Pancreas (tissue), 10 donors: ENCODE measurements at regions of chr22 and their contacts with region 1.

Region 1: GRCh38 chr22:46245511-46245910 is 4.6 kb downstream of the CDPF1 start:
- DNase-seq: no peak
- ATAC-seq: no peak
- H3K4me3 ChIP-seq: no peak overlapping the region
- H3K27ac ChIP-seq: no peak overlapping the region
- H3K4me1 ChIP-seq: peaks cover 0 to 13% (median 0%) of the 10 kb centered on the region in 3 donors
- H3K27me3 ChIP-seq: no peaks in the 10 kb centered on the region
- CTCF ChIP-seq: no peak

Region 2: GRCh38 chr22:46122511-46122971 is 123.0 kb before region 1 on chr22:
- intact Hi-C with region 1: no loop called
- DNase-seq: peak in 5 of 6 donors; percentile 54 to 93 (median 83)
- ATAC-seq: peak; percentile 47 to 80 (median 74)
- H3K4me3 ChIP-seq: no peak overlapping the region
- H3K27ac ChIP-seq: no peak overlapping the region
- H3K4me1 ChIP-seq: no peaks in the 10 kb centered on the region
- H3K27me3 ChIP-seq: no peaks in the 10 kb centered on the region
- CTCF ChIP-seq: peak; percentile 86 to 95 (median 90)

Region 3: DNA sequence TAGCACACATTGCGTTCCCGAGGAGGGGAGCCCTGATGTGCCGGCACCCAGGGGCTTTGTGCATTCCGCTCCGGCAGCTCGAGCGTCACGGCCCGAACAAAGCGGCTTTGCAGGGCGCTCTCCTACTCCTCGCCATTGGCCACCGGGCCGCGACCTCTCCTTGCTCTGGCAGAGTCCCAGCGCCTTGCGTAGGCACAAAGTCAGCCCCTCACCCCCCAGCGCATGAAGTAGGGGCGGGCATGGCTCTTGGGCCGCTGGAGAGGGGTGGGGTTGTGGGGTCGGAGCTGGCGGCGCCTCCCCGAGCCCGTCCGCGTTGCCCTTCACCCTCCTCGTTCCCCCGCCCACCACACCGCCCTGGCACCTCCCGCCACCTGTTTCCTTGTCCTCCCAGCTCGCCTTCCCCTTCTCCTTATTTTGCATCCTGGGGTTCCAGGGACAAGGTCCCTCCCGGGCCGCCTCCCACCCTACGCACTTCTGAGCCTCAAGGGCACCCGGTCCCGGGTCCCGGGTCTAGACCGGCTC is 95.9 kb before region 1 on chr22:
- intact Hi-C with region 1: loop called in 1 of 3 experiments (anchors 10 kb)
- DNase-seq: peak; percentile 73 to 91 (median 80)
- ATAC-seq: peak; percentile 53 to 66 (median 60)
- H3K4me3 ChIP-seq: peak overlapping the region; percentile 52 to 91 (median 81)
- H3K27ac ChIP-seq: peak overlapping the region; percentile 71 to 97 (median 92)
- H3K4me1 ChIP-seq: peaks cover 0 to 5% (median 3%) of the 10 kb centered on the region in 3 donors
- H3K27me3 ChIP-seq: no peaks in the 10 kb centered on the region
- CTCF ChIP-seq: no peak

Region 4: DNA sequence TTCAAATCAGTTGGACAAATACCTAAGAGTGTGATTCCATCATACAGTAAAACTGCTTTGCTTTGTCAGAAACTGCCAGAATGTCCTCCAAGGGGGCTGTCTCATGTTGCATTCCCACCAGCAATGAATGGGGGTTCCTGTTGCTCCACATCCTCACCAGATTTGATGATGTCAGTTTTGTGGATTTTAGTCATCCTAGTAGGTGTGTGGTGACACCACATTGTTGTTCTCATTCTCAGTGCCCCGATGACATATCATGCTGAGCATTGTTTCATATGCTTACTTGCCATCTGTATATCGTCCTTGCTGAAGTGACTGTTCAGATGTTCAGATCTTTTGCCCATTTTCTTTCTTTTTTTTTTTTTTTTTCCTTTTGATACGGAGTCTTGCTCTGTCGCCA is 32.5 kb before region 1 on chr22:
- intact Hi-C with region 1: no loop called
- DNase-seq: no peak
- ATAC-seq: no peak
- H3K4me3 ChIP-seq: no peak overlapping the region
- H3K27ac ChIP-seq: no peak overlapping the region
- H3K4me1 ChIP-seq: no peaks in the 10 kb centered on the region
- H3K27me3 ChIP-seq: no peaks in the 10 kb centered on the region
- CTCF ChIP-seq: no peak

Region 5: DNA sequence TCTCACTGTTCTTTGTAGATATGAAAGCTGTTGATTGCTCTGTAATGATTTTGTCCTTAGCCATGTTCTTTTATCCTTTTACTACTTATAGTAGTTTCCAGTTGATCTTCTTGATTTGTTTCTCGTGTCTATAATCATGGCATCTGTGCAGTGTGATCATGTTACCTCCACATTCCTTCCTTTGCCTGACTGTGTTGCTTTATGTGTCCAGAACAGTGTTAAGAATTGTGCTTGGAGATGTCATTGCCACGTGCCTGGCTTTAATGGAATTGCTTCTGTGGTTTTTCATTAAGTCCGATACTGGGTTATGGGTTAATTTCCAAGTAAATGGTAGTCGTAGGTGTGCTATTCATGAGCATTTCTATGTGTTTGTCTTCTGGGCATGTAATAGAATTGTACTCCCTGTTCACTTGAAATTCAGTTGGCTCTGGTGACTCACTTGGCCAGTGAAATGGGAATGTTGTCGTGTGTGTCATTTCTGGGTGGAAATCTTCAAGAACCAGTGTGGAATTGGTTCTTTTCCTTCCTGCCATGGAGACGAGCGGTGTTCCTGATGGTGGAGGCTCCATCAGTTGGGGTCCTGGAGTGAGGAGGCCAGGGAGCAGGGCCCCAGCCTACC is 57.9 kb after region 1 on chr22:
- intact Hi-C with region 1: loop called in 1 of 3 experiments (anchors 10 kb)
- DNase-seq: no peak
- ATAC-seq: no peak
- H3K4me3 ChIP-seq: no peak overlapping the region
- H3K27ac ChIP-seq: no peak overlapping the region
- H3K4me1 ChIP-seq: no peaks in the 10 kb centered on the region
- H3K27me3 ChIP-seq: no peaks in the 10 kb centered on the region
- CTCF ChIP-seq: no peak

Region 6: DNA sequence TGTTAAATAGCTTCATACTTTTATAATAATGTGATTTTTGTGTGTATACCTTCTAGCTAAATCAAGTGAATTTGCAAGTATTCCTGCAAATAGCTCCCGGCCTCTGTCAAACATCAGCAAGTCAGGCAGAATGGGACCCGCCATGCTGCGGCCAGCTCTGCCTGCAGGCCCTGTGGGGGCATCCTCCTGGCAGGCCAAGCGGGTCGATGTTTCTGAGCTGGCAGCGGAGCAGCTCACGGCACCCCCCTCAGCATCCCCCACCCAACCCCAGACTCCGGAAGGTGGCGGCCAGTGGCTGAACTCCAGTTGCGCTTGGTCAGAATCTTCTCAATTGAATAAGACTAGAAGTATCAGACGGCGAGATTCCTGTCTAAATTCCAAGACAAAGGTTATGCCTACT is 70.5 kb after region 1 on chr22:
- intact Hi-C with region 1: no loop called
- DNase-seq: peak in 2 of 6 donors; percentile 25 to 38
- ATAC-seq: no peak
- H3K4me3 ChIP-seq: no peak overlapping the region
- H3K27ac ChIP-seq: no peak overlapping the region
- H3K4me1 ChIP-seq: no peaks in the 10 kb centered on the region
- H3K27me3 ChIP-seq: no peaks in the 10 kb centered on the region
- CTCF ChIP-seq: no peak